MCF 10A (cell line): ENCODE measurements at regions of chrX and their contacts with region 1.

Region 1: GRCh38 chrX:74865725-74866124 is 59.5 kb downstream of the NEXMIF start:
- DNase-seq: no peak
- H3K4me3 Mint-ChIP-seq: no peak overlapping the region
- H3K27ac Mint-ChIP-seq: no peak overlapping the region
- H3K4me1 Mint-ChIP-seq: no peaks in the 10 kb centered on the region
- H3K27me3 Mint-ChIP-seq: no peaks in the 10 kb centered on the region
- CTCF ChIP-seq: no peak

Region 2: DNA sequence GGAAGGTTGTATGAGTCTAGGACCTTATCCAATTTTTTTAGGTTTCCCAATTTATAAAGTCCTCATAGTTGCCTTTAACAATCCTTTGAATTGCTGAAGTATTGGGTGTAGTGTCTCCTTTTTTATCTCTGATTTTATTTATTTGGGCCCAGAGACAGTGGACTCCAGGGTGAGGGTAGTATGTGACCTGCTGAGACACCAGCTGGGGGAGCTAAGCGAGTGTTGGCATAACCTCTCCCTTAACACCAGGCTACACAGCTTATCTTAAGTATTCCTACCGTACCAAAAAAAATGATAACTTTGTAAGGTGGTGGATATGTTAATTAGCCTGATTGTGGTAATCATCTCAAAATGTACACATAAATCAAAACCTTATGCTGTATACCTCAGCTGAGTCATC is 1455.6 kb before region 1 on chrX:
- CTCF ChIA-PET with region 1: no interaction called
- POLR2A ChIA-PET with region 1: no interaction called
- intact Hi-C with region 1: no loop called
- DNase-seq: no peak
- H3K4me3 Mint-ChIP-seq: no peak overlapping the region
- H3K27ac Mint-ChIP-seq: no peak overlapping the region
- H3K4me1 Mint-ChIP-seq: no peaks in the 10 kb centered on the region
- H3K27me3 Mint-ChIP-seq: peaks cover 35% of the 10 kb centered on the region
- CTCF ChIP-seq: no peak

Region 3: DNA sequence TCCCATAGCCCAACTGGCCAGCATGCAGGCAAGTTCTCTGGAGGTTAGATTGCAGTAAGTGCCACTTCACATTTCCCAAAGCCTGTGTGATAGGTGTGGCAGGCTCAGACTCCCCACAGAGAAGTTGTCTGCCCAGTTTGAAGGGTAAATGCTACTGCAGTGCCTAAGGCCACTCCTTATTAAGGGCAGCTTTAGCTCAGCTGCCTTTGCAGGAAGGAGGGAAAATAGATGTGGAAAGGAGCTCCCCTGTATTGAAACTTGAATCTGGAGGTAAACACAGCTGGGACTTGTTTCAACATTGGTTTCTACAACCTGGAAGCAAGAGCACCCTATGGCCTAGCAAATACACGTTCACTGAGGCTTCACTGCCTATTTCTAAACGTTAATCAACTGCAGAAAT is 37.1 kb after region 1 on chrX:
- CTCF ChIA-PET with region 1: no interaction called
- POLR2A ChIA-PET with region 1: no interaction called
- intact Hi-C with region 1: loop called (anchors 2 kb)
- DNase-seq: no peak
- H3K4me3 Mint-ChIP-seq: no peak overlapping the region
- H3K27ac Mint-ChIP-seq: no peak overlapping the region
- H3K4me1 Mint-ChIP-seq: no peaks in the 10 kb centered on the region
- H3K27me3 Mint-ChIP-seq: no peaks in the 10 kb centered on the region
- CTCF ChIP-seq: no peak